ENCODE measurements at regions of chr5 and their contacts with region 1.

Region 1: GRCh38 chr5:172777881-172778814 is 7.2 kb upstream of the DUSP1 start:
- DNase-seq: no peak
- H3K4me3 ChIP-seq: peak overlapping the region; percentile 1 to 7
- H3K4me3 Mint-ChIP-seq: peak overlapping the region; percentile 11 to 87 (median 78)
- H3K27ac ChIP-seq: peak overlapping the region; percentile 89
- H3K27ac Mint-ChIP-seq: peak overlapping the region; percentile 95 to 99 (median 98)
- H3K4me1 ChIP-seq: peaks cover 42% of the 10 kb centered on the region
- H3K4me1 Mint-ChIP-seq: peaks cover 29 to 51% (median 41%) of the 10 kb centered on the region in 4 donors
- H3K27me3 ChIP-seq: no peaks in the 10 kb centered on the region
- H3K27me3 Mint-ChIP-seq: no peaks in the 10 kb centered on the region

Region 2: GRCh38 chr5:172705576-172706084 is 72.5 kb before region 1 on chr5:
- CTCF ChIA-PET with region 1: no interaction called
- POLR2A ChIA-PET with region 1: no interaction called
- intact Hi-C with region 1: no loop called
- DNase-seq: no peak
- H3K4me3 ChIP-seq: no peak overlapping the region
- H3K4me3 Mint-ChIP-seq: no peak overlapping the region
- H3K27ac ChIP-seq: no peak overlapping the region
- H3K27ac Mint-ChIP-seq: no peak overlapping the region
- H3K4me1 ChIP-seq: peaks cover 9% of the 10 kb centered on the region
- H3K4me1 Mint-ChIP-seq: peaks cover 6 to 16% (median 12%) of the 10 kb centered on the region in 4 donors
- H3K27me3 ChIP-seq: peaks cover 7% of the 10 kb centered on the region
- H3K27me3 Mint-ChIP-seq: peaks cover 32 to 49% of the 10 kb centered on the region in 2 donors

Region 3: DNA sequence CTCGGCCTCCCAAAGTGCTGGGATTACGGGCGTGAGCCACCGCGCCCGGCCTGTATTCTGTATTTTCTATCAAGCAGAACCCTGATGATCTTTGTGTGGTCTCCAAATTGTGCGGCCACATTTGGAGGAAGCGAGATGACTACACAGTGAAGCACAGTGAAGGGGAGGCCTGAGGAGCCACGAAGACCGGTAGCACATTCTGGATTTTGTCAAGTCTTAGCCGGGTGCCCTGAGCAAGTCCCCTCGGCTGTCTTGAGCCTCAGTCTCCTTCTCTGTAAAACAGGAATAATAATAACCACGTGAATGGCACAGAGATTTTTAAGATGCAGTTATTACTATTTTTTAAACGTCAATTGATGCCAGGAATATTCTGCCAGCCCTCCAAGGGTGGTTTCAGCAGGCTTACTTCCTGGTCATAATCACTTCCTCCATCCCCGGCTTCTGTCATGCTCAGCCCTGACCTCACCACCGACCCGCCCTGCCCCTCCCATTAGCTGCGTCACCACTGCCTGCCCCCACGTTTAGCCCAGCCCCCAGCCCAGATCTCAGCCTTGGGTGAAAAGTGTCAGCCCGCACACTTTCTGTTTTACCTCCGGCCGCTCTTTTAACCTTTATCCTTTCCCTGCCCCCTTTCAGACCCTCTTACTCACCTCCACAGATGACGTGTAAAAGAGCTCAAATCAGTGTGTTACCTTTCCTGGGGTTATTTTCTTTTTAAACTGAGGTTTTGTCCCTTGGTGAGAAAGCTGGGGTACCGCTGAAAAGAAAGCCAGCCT is 28.9 kb after region 1 on chr5:
- CTCF ChIA-PET with region 1: interaction called, 10 read pairs
- POLR2A ChIA-PET with region 1: interaction called, 60 read pairs
- intact Hi-C with region 1: loop called (anchors 1 kb)
- DNase-seq: peak; percentile 72 to 88 (median 78)
- H3K4me3 ChIP-seq: peak overlapping the region in 1 of 2 donors; percentile 21
- H3K4me3 Mint-ChIP-seq: peak overlapping the region; percentile 75 to 91 (median 82)
- H3K27ac ChIP-seq: peak overlapping the region; percentile 52
- H3K27ac Mint-ChIP-seq: peak overlapping the region; percentile 79 to 98 (median 95)
- H3K4me1 ChIP-seq: peaks cover 11% of the 10 kb centered on the region
- H3K4me1 Mint-ChIP-seq: peaks cover 9 to 16% (median 14%) of the 10 kb centered on the region in 4 donors
- H3K27me3 ChIP-seq: no peaks in the 10 kb centered on the region
- H3K27me3 Mint-ChIP-seq: peaks cover 0 to 1% of the 10 kb centered on the region in 2 donors

Region 4: GRCh38 chr5:172833686-172834414 is 55.7 kb after region 1 on chr5 and contains the start of gene ERGIC1:
- CTCF ChIA-PET with region 1: interaction called, 8 read pairs
- POLR2A ChIA-PET with region 1: interaction called, 114 read pairs
- intact Hi-C with region 1: loop called (anchors 1 kb)
- DNase-seq: peak; percentile 59 to 73 (median 63)
- H3K4me3 ChIP-seq: peak within 1 kb of the TSS; percentile 63 to 69
- H3K4me3 Mint-ChIP-seq: peak within 1 kb of the TSS; percentile 90 to 96 (median 92)
- H3K27ac ChIP-seq: peak within 1 kb of the TSS; percentile 82
- H3K27ac Mint-ChIP-seq: peak within 1 kb of the TSS; percentile 89 to 97 (median 93)
- H3K4me1 ChIP-seq: peaks cover 47% of the 10 kb centered on the region
- H3K4me1 Mint-ChIP-seq: peaks cover 25 to 52% (median 36%) of the 10 kb centered on the region in 4 donors
- H3K27me3 ChIP-seq: no peaks in the 10 kb centered on the region
- H3K27me3 Mint-ChIP-seq: no peaks in the 10 kb centered on the region
- total RNA-seq, gene ERGIC1: 45.8 to 51.0 TPM